Dorsolateral prefrontal cortex (tissue), 120 donors: ENCODE measurements at regions of chr6 and their contacts with region 1.

Region 1: DNA sequence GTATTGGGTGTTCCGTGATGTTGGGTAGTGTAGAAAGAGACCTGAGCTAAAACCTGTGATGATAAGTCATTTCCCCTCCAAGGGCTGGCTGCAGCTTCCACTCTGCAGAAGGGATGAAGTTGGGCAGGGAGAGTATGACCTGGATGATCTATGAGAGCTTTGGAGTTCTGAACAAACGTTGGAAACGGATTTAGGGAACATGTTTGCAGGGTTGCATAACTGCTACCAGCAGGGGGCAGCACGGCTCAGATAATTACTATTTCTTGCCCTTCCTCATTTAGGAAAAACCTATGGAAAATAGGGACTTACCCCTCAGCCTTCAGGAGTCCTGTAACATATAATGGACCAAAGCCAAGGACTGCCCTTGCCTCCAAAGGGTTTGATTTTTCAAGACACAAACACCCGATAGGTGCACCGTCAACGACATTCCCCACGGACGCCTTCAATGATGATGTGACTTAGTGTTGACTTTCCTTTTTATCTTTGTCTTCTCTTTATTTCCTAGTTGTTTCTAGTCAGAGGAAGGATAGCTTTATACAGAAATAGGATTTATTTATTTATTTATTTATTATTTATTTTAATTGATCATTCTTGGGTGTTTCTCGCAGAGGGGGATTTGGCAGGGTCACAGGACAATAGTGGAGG is 164.9 kb upstream of the SASH1 start:
- DNase-seq: peak in 8 of 10 donors; percentile 43 to 75 (median 62)
- H3K4me3 ChIP-seq: no peak overlapping the region
- H3K27ac ChIP-seq: no peak overlapping the region
- H3K27me3 ChIP-seq: peaks cover 0 to 2% (median 0%) of the 10 kb centered on the region in 45 donors
- CTCF ChIP-seq: peak; percentile 77 to 94 (median 86)

Region 2: GRCh38 chr6:148090326-148090725 is 87.4 kb before region 1 on chr6:
- intact Hi-C with region 1: no loop called
- DNase-seq: no peak
- H3K4me3 ChIP-seq: no peak overlapping the region
- H3K27ac ChIP-seq: no peak overlapping the region
- H3K27me3 ChIP-seq: no peaks in the 10 kb centered on the region
- CTCF ChIP-seq: no peak

Region 3: DNA sequence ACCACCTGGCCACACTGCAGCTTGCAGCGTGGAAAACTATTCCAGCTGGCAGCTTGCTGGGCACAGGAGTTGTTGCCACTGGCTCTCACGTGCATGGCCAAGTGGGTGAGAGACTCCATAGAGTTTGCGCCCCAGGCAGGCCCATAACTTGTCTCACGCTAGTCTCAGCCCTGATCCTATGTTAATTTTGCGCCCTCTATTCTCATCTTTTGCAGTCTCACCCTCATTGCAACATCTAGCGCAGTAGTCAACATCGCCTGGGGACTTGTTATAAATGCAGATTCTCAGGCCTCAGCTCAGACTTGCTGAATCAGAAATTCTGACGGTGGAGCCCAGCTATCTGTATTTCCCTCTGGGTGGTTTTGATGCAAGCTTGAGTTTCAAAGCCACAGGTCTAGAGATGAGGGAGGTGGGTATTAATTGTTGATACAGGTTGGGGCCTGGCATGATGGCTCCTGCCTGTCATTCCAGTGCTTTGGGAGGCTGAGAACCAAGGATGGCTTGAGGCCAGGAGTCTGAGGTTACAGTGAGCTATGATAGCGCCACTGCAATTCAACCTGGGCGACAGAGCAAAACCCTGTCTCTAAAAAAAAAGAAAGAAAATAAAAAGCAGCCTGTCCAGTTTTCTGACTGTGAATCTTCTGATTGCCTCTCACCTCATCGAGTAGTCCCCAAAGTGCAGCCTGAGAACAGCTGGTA is 20.0 kb before region 1 on chr6:
- intact Hi-C with region 1: no loop called
- DNase-seq: peak in 2 of 10 donors; percentile 32 to 50
- H3K4me3 ChIP-seq: no peak overlapping the region
- H3K27ac ChIP-seq: no peak overlapping the region
- H3K27me3 ChIP-seq: no peaks in the 10 kb centered on the region
- CTCF ChIP-seq: no peak

Region 4: DNA sequence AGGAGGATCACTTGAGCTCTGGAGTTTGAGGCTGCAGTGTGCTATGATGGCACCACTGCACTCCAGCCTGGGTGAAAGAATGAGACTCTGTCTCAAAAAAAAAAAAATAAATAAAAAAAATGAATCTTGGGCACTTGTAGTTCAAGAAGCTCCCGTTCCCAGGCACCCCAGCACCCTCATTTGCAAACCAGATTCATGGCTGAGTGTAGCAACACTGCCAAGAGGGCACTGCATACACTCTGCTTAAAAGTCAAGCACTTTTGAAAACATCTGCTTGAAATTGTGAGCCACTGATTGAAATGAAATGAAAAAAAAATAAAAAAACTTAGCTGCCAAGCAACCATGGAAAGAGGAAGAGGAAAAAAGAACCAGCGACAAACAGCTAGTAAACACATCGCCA is 40.2 kb after region 1 on chr6:
- intact Hi-C with region 1: loop called in 1 of 2 experiments (anchors 5 kb)
- DNase-seq: no peak
- H3K4me3 ChIP-seq: no peak overlapping the region
- H3K27ac ChIP-seq: peak overlapping the region in 22 of 59 donors; percentile 2 to 53 (median 21)
- H3K27me3 ChIP-seq: no peaks in the 10 kb centered on the region
- CTCF ChIP-seq: no peak

Region 5: GRCh38 chr6:148250975-148251685 is 73.4 kb after region 1 on chr6:
- intact Hi-C with region 1: loop called (anchors 2 to 5 kb)
- DNase-seq: no peak
- H3K4me3 ChIP-seq: peak overlapping the region in 2 of 59 donors; percentile 13
- H3K27ac ChIP-seq: peak overlapping the region in 22 of 59 donors; percentile 0 to 70 (median 38)
- H3K27me3 ChIP-seq: no peaks in the 10 kb centered on the region
- CTCF ChIP-seq: peak in 54 of 56 donors; percentile 35 to 79 (median 59)

Region 6: DNA sequence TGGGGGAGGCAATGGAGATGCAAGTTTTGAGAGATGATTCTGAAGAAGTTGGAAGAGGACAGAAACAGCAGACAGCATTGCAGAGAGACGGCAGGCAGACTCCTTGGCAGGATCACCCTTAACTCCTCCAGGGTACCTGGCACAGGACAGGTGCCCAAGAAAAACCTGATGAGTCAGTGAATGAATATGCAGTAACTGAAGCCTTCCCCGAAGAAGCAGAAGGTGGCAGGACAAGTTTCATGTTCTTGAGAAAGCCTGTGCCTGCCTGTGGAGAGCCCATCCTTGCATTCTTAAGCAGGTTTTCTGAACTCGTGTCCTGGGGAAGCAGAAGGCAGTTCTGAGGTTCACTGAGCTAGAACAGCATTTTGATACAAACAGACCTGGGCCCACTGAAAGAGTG is 85.3 kb after region 1 on chr6:
- intact Hi-C with region 1: no loop called
- DNase-seq: no peak
- H3K4me3 ChIP-seq: no peak overlapping the region
- H3K27ac ChIP-seq: no peak overlapping the region
- H3K27me3 ChIP-seq: no peaks in the 10 kb centered on the region
- CTCF ChIP-seq: no peak

Region 7: GRCh38 chr6:148464319-148465010 is 286.8 kb after region 1 on chr6:
- intact Hi-C with region 1: loop called (anchors 2 to 5 kb)
- DNase-seq: peak in 9 of 10 donors; percentile 19 to 84 (median 64)
- H3K4me3 ChIP-seq: peak overlapping the region in 2 of 59 donors; percentile 2 to 4
- H3K27ac ChIP-seq: peak overlapping the region; percentile 25 to 94 (median 84)
- H3K27me3 ChIP-seq: no peaks in the 10 kb centered on the region
- CTCF ChIP-seq: peak; percentile 89 to 100 (median 97)

Region 8: DNA sequence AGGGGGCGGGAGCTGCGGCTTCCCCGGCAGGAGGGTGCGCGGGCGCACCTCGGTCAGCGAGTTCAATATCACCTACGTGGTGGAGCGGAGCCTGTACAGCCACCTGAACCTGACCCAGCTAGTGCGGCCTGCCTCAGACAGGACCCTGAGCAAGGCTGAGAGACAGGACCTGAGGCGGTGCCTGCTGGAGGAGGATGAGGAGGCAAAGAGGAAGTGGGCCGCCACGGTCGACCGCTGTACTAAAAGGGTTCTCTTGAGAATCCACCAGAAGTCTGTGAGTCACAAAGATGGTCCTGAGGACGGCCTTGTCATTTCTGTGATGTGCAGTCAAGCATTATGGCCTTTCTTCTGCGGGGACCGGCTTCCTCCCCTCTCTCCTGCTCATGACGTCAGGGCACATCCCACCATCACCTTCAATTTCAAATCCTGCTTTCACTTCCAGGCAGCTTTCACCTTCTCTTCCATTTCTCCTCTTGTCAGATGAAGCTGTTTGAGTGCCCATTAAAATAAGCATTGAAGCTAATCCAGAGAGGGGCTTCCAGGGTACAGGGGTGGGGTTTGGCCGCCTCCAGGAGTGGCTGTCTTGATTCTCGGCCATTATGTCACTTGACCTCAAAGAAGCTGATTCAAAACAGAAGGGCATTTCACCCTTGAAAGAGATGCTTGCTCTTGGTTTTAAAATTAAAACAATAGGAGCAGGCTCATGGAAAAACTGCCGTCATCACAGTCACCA is 342.6 kb after region 1 on chr6:
- intact Hi-C with region 1: loop called in 1 of 2 experiments (anchors 10 kb)
- DNase-seq: no peak
- H3K4me3 ChIP-seq: no peak overlapping the region
- H3K27ac ChIP-seq: peak overlapping the region; percentile 5 to 98 (median 92)
- H3K27me3 ChIP-seq: no peaks in the 10 kb centered on the region
- CTCF ChIP-seq: no peak

Region 9: GRCh38 chr6:148530394-148530953 is 352.8 kb after region 1 on chr6:
- intact Hi-C with region 1: loop called (anchors 5 to 10 kb)
- DNase-seq: no peak
- H3K4me3 ChIP-seq: peak overlapping the region in 46 of 59 donors; percentile 1 to 61 (median 32)
- H3K27ac ChIP-seq: peak overlapping the region; percentile 6 to 98 (median 84)
- H3K27me3 ChIP-seq: no peaks in the 10 kb centered on the region
- CTCF ChIP-seq: peak in 4 of 56 donors; percentile 5 to 33 (median 12)